ENCODE measurements at regions of chr2 and their contacts with region 1.

Region 1: GRCh38 chr2:240060977-240061591 is 7.8 kb upstream of the OR6B3 start:
- DNase-seq: no peak
- ATAC-seq: peak in 4 of 8 donors; percentile 35 to 65 (median 55)
- H3K4me3 ChIP-seq: no peak overlapping the region
- H3K27ac ChIP-seq: no peak overlapping the region
- H3K4me1 ChIP-seq: no peaks in the 10 kb centered on the region
- H3K27me3 ChIP-seq: peaks cover 0 to 46% (median 27%) of the 10 kb centered on the region in 7 donors
- CTCF ChIP-seq: peak in 8 of 9 donors; percentile 41 to 71 (median 62)

Region 2: GRCh38 chr2:240032406-240033329 is 28.4 kb before region 1 on chr2:
- intact Hi-C with region 1: loop called in 1 of 10 experiments (anchors 1 kb)
- DNase-seq: no peak
- ATAC-seq: no peak
- H3K4me3 ChIP-seq: no peak overlapping the region
- H3K27ac ChIP-seq: no peak overlapping the region
- H3K4me1 ChIP-seq: no peaks in the 10 kb centered on the region
- H3K27me3 ChIP-seq: peaks cover 0 to 42% (median 16%) of the 10 kb centered on the region in 7 donors
- CTCF ChIP-seq: no peak